ENCODE measurements at regions of chr7 and their contacts with region 1.

Region 1: GRCh38 chr7:36048141-36048901 is 104.7 kb upstream of the EEPD1 start:
- DNase-seq: peak; percentile 83
- H3K4me3 ChIP-seq: no peak overlapping the region
- H3K27ac ChIP-seq: no peak overlapping the region
- H3K4me1 ChIP-seq: peaks cover 18% of the 10 kb centered on the region
- H3K27me3 ChIP-seq: no peaks in the 10 kb centered on the region
- CTCF ChIP-seq: no peak

Region 2: GRCh38 chr7:35753761-35754603 is 294.3 kb before region 1 on chr7:
- CTCF ChIA-PET with region 1: no interaction called
- dilution Hi-C with region 1: no loop called
- in situ Hi-C with region 1: no loop called
- intact Hi-C with region 1: no loop called
- DNase-seq: no peak
- H3K4me3 ChIP-seq: no peak overlapping the region
- H3K27ac ChIP-seq: no peak overlapping the region
- H3K4me1 ChIP-seq: peaks cover 5% of the 10 kb centered on the region
- H3K27me3 ChIP-seq: no peaks in the 10 kb centered on the region
- CTCF ChIP-seq: no peak

Region 3: GRCh38 chr7:36021367-36021766 is 27.0 kb before region 1 on chr7:
- CTCF ChIA-PET with region 1: interaction called, 13 read pairs
- dilution Hi-C with region 1: no loop called
- in situ Hi-C with region 1: no loop called
- intact Hi-C with region 1: no loop called
- DNase-seq: no peak
- H3K4me3 ChIP-seq: no peak overlapping the region
- H3K27ac ChIP-seq: no peak overlapping the region
- H3K4me1 ChIP-seq: no peaks in the 10 kb centered on the region
- H3K27me3 ChIP-seq: no peaks in the 10 kb centered on the region
- CTCF ChIP-seq: peak; percentile 40 to 59

Region 4: GRCh38 chr7:36840904-36841303 is 792.6 kb after region 1 on chr7:
- CTCF ChIA-PET with region 1: no interaction called
- dilution Hi-C with region 1: no loop called
- in situ Hi-C with region 1: no loop called
- intact Hi-C with region 1: no loop called
- DNase-seq: no peak
- H3K4me3 ChIP-seq: no peak overlapping the region
- H3K27ac ChIP-seq: no peak overlapping the region
- H3K4me1 ChIP-seq: no peaks in the 10 kb centered on the region
- H3K27me3 ChIP-seq: no peaks in the 10 kb centered on the region
- CTCF ChIP-seq: no peak

Measured in mammary epithelial cell (primary cell).